BJ (cell line): ENCODE measurements at regions of chr1 and their contacts with region 1.

Region 1: GRCh38 chr1:204207136-204207616 is 6.6 kb downstream of the GOLT1A start:
- DNase-seq: no peak
- H3K4me3 ChIP-seq: no peak overlapping the region
- H3K27me3 ChIP-seq: no peaks in the 10 kb centered on the region
- CTCF ChIP-seq: peak; percentile 98

Region 2: DNA sequence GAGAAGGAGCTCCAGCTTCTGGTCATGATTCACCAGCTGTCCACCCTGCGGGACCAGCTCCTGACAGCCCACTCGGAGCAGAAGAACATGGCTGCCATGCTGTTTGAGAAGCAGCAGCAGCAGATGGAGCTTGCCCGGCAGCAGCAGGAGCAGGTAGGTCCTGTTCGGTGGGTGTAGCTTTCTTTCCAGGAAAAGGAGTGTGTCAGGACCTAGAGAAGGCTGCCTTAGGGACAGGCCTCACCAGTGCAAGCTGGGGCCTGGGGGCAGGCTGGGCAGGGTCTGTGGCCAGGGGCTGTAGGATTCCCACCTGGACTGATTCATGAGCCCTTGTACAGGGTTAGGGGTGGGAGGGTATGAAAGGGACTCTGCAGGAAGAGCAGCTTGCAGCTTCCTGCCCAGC is 90.6 kb before region 1 on chr1:
- CTCF ChIA-PET with region 1: no interaction called
- POLR2A ChIA-PET with region 1: no interaction called
- DNase-seq: no peak
- H3K4me3 ChIP-seq: no peak overlapping the region
- H3K27me3 ChIP-seq: no peaks in the 10 kb centered on the region
- CTCF ChIP-seq: no peak

Region 3: GRCh38 chr1:204151552-204152309 is 55.4 kb before region 1 on chr1 and contains the start of gene ETNK2:
- CTCF ChIA-PET with region 1: interaction called, 33 read pairs
- POLR2A ChIA-PET with region 1: no interaction called
- DNase-seq: no peak
- H3K4me3 ChIP-seq: peak within 1 kb of the TSS; percentile 73
- H3K27me3 ChIP-seq: no peaks in the 10 kb centered on the region; the same call in 1 of the 2 replicates
- CTCF ChIP-seq: no peak
- polyA plus RNA-seq, gene ETNK2: 27.2 and 30.7 TPM in 2 replicates

Region 4: DNA sequence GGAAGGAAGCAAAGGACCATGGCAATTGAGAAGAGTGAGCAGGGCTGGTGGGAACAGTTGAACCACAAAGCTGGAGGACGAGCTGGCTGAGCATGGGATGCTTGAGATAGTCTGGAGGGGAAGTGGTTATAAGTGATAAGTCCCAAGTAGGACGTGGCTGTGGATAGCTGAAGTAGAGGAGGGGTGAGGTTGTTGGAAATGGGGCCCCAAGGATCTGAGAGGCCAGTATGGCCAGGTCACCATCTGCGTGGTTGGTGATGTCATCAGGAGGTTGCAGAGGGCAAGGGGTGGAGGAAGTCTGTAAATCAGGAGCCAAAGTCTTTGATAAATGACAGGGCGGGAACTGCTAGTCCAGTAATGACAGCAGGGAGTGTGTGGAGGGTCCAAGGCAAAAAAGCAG is 30.0 kb before region 1 on chr1:
- CTCF ChIA-PET with region 1: interaction called, 30 read pairs
- POLR2A ChIA-PET with region 1: no interaction called
- DNase-seq: no peak
- H3K4me3 ChIP-seq: no peak overlapping the region
- H3K27me3 ChIP-seq: no peaks in the 10 kb centered on the region
- CTCF ChIP-seq: no peak

Region 5: GRCh38 chr1:204225841-204226735 is 18.9 kb after region 1 on chr1:
- CTCF ChIA-PET with region 1: interaction called, 27 read pairs
- POLR2A ChIA-PET with region 1: no interaction called
- DNase-seq: no peak
- H3K4me3 ChIP-seq: no peak overlapping the region
- H3K27me3 ChIP-seq: no peaks in the 10 kb centered on the region
- CTCF ChIP-seq: no peak

Region 6: DNA sequence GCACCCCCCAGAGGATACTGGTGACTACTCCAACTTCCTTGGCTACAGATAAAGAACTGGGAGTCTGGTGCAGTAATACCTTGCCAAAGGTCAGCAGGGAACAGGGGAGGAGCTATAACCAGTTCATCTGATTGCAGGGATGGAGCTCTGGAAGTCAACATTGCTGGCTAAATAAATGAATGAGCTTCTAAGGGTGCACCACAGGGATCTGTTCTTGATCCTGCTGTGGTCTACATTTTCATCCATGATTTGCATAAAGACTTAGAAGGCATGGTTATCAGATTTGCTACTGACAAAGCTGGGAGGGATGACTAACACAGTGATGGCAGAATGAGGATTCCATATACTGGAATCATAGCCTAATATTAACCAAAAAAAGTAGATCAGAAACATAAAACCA is 134.2 kb after region 1 on chr1:
- CTCF ChIA-PET with region 1: interaction called, 10 read pairs
- POLR2A ChIA-PET with region 1: interaction called, 3 read pairs
- DNase-seq: no peak
- H3K4me3 ChIP-seq: no peak overlapping the region
- H3K27me3 ChIP-seq: no peaks in the 10 kb centered on the region
- CTCF ChIP-seq: no peak

Region 7: DNA sequence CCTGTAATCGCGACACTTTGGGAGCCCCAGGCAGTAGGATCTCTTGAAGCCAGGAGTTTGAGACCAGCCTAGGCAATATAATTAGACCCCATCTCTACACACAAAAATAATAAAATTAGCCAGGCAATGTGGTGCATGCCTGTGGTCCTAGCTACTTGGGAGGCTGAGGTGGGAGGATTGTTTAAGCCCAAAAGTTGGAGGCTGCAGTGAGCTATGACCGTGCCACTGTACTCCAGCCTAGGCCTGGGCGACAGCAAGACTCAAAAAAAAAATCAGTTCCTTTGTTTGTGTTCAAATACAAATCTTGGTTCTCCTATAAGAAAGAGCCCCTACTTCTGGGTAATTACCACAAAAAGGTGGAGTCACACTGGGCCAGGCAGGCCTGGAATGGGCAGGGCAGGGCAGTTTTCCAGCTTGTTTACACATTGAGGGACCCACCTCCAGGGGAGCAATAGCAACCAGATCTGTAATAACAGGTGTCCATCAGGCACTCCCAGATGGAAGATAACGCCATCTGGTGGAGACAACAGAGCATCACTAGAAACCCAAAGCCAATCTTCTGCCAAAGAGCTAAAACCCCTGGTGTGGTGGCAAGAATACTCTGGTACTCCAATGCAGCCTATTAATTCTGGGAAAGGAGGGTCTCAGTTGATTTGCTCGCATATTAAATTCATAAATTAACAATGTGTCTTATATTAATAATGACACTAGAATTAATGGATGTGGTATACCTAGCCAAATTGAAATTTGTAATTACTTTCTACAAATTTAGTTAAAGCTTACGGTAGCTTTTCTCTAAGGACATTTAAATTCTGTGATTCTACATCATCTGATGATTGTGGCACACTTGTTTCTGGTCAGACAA is 191.3 kb after region 1 on chr1:
- CTCF ChIA-PET with region 1: interaction called, 13 read pairs
- POLR2A ChIA-PET with region 1: no interaction called
- DNase-seq: no peak
- H3K4me3 ChIP-seq: no peak overlapping the region
- H3K27me3 ChIP-seq: no peaks in the 10 kb centered on the region
- CTCF ChIP-seq: peak; percentile 87

Region 8: DNA sequence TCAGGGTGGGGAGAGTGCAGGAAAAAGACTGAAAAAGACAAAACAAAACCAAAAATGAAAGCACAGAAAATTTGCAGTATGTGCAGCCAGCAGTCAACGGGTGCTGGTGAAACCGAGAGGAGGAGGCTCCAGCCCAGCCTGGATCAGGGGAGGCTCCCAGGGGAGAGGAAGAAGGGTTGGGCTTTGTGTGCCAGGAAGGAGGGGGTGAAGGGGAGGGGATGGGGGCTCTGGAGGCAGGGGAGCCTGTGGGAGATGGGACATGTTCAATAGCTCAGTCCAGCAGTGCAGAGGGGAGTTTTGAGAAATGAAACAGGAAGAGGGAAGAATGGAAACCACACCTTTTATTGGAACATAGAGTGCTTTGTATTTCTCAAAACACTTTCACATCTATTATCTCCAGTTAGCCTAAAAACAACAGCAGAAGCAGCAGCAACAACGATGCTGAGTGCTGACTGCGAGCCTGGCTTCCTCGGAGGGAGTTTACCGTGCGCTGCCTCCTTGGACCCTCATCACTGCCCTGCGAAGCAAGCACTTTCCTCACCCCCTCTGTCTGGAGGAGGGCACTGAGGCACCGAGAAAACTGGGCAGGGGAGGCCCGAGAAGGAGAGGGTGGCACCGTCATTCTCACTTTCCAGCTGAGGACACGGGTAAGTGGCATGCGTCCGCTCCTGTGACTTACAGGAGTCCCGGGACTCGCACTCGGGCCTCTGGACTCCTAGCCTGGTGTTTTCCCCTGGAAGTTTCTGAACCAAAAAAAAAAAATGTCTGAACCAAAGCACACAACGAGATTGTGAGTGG is 371.9 kb after region 1 on chr1:
- CTCF ChIA-PET with region 1: no interaction called
- POLR2A ChIA-PET with region 1: no interaction called
- DNase-seq: no peak
- H3K4me3 ChIP-seq: no peak overlapping the region
- H3K27me3 ChIP-seq: no peaks in the 10 kb centered on the region
- CTCF ChIP-seq: no peak

Region 9: DNA sequence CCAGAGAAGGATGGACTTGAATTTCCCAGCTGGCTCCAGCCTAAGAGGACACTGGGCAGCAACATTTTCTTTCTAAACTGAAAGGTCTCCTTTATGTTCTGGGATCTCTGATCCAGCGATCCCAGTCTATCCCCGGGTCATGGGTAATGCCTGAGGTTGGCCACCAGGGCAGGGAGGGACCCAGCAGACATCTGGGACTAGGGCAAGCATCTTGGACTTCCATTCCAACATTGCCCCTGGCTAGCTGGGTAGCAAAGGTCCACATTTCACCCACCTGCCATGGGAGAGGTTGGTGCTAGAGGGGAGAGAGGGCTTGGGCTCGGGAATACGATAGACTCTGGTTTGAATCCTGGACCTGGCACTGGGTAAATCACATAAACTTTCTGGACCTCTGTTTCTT is 393.8 kb after region 1 on chr1:
- CTCF ChIA-PET with region 1: no interaction called
- POLR2A ChIA-PET with region 1: no interaction called
- DNase-seq: no peak
- H3K4me3 ChIP-seq: no peak overlapping the region
- H3K27me3 ChIP-seq: peaks cover 15% of the 10 kb centered on the region
- CTCF ChIP-seq: peak; percentile 10; the same call in 1 of the 2 replicates